Activated B cell treated with CpG ODN at 0.5 μM for 24 hours (primary cell): ENCODE measurements at regions of chr15 and their contacts with region 1.

Region 1: DNA sequence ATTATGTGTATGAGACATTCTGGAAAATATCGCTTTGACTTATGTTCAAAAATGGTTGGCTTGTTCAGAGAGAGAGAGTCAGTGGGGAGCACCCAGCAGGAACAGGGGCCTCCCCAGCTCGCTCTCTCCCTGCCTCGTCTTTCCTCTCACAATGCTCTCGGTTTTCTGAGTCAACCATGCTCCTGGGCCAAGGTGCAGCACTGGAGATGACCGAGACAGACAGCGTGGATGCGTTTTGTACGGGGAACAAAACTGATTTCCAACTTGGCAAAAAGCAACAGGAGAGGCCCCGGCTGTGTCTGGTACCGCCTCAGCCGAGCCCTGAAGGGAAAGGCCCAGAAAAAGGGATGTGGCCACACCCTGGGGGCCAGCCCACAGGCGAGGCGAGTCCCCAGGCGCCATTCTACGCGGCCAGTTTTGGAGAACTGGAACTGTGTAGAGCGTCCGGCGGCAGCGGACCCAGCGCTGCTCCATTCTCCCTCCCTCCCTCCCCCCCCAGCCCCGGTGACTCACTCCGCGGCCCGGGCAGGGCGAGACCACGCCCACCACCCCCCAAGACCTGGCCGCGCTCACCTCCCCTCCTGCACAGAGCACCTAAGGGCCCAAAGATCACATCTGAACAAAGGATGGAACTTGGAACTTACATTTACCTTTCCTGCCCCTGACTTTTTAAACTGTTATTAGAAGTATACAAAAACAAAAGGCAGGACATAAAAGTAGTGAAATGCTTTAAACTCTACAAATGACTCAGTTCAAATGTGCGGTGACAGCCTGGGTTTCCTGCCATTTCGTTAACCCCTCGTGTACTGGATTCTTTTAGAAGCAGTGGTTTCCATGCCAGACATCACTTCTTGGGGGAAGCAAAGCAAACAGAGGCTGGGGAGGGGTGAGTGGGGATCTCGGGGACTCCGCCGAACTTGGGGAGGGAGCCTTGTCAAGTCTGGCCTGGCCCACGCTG is 12.7 kb downstream of the ATP10A start:
- DNase-seq: peak; percentile 67
- ATAC-seq: peak; percentile 88
- H3K4me3 Mint-ChIP-seq: peak overlapping the region; percentile 84
- H3K27ac Mint-ChIP-seq: peak overlapping the region; percentile 93
- H3K4me1 Mint-ChIP-seq: peaks cover 66% of the 10 kb centered on the region
- H3K27me3 Mint-ChIP-seq: peaks cover 3% of the 10 kb centered on the region
- CTCF ChIP-seq: no peak

Region 2: DNA sequence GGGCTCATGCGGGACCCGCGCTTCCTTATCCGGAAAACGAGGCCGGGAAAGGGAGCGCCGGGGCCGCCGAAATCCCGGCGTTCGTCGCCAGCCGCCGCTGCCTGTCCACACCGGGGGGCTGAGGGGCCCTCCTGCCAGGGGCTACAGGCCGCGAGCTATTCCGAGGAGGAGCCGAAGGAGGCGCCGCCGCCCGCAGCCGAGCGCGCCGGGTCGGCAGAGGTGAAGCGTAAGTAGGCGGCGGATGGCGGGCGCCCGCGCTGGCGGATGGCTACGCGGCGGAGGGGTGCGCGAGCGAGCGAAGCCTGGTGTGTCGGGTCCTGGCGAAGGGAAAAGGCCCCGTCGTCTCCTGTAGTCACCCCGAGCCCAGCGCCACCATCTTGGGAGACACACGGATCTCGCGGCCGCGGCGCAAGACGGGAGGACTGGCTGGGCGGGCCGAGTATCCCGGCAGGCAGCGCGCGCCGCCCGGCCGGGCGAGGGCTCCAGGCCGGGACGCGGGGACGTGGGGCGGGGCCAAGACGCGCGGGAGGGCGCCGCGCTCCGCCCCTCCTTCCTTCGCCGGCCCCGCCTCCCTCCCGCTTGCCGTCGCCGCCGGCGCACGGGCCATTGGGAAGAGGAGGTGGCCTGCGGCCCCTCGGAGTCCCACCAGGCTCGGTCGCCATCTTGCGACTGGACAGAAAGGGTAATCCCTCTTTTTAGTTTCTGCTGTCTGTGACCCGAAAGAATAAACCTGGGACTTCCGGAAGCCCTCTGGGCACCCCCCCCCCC is 411.6 kb before region 1 on chr15 and contains the start of gene UBE3A:
- CTCF ChIA-PET with region 1: no interaction called
- POLR2A ChIA-PET with region 1: no interaction called
- intact Hi-C with region 1: loop called (anchors 1 kb)
- DNase-seq: peak; percentile 93
- ATAC-seq: peak; percentile 92
- H3K4me3 Mint-ChIP-seq: peak within 1 kb of the TSS; percentile 88
- H3K27ac Mint-ChIP-seq: peak within 1 kb of the TSS; percentile 91
- H3K4me1 Mint-ChIP-seq: peaks cover 44% of the 10 kb centered on the region
- H3K27me3 Mint-ChIP-seq: no peaks in the 10 kb centered on the region
- CTCF ChIP-seq: no peak
- total RNA-seq, gene UBE3A: 106 and 122 TPM in 2 replicates

Region 3: DNA sequence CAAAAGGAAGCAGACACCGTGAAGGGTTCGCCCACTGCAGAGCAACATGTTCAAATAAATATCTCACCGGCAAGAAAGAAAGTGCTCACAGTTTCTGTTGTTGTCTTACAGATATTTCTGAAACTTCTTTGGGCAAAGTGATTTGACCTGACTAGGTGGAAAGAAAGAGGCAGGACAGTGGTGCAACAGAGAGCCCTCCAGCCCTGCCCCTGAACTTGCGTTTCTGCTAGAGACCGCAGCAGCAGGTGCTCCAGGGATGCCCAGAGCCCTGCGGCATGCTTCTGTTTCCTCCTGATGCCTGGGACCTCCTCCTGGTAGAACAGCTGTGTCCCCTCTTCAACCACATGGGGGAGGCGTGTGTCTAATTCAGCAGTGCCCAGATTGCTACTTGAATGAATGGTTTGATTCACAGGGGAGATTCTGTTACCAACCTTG is 110.7 kb before region 1 on chr15:
- CTCF ChIA-PET with region 1: no interaction called
- POLR2A ChIA-PET with region 1: no interaction called
- intact Hi-C with region 1: loop called (anchors 1 kb)
- DNase-seq: no peak
- ATAC-seq: peak; percentile 78
- H3K4me3 Mint-ChIP-seq: no peak overlapping the region
- H3K27ac Mint-ChIP-seq: no peak overlapping the region
- H3K4me1 Mint-ChIP-seq: peaks cover 20% of the 10 kb centered on the region
- H3K27me3 Mint-ChIP-seq: peaks cover 37% of the 10 kb centered on the region
- CTCF ChIP-seq: no peak

Region 4: DNA sequence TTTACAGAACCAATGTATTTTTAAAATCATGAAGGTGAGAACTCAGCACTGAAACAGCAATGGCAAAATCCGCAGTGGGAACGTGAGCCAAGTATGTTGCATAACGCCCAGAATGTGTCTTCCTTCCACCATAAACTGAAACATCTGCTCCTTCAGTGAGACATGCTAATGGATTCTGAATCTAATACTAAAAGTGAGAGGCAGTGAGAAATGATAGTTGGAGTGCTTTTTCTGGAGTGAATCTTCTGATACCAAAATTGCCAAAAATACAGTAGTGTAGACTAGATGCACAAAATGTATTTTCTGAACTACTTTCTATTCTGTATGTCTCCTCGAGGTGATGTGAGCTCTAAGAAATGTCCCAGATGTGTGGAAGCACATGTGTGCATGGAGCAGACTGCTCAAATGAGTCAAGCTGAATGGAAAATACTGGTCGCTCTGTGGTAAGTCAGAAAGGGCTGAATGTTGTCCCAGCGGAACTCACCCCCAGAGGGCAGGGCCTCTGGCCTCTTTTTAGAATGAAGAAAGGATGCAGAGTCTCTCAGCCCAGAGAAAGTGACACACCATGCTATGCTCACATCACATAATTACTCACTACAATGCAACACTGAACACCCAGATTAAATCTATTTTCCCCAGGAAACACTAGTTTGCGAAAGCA is 60.3 kb before region 1 on chr15:
- CTCF ChIA-PET with region 1: no interaction called
- POLR2A ChIA-PET with region 1: no interaction called
- intact Hi-C with region 1: loop called (anchors 1 kb)
- DNase-seq: no peak
- ATAC-seq: no peak
- H3K4me3 Mint-ChIP-seq: no peak overlapping the region
- H3K27ac Mint-ChIP-seq: no peak overlapping the region
- H3K4me1 Mint-ChIP-seq: peaks cover 20% of the 10 kb centered on the region
- H3K27me3 Mint-ChIP-seq: peaks cover 14% of the 10 kb centered on the region
- CTCF ChIP-seq: no peak

Region 5: DNA sequence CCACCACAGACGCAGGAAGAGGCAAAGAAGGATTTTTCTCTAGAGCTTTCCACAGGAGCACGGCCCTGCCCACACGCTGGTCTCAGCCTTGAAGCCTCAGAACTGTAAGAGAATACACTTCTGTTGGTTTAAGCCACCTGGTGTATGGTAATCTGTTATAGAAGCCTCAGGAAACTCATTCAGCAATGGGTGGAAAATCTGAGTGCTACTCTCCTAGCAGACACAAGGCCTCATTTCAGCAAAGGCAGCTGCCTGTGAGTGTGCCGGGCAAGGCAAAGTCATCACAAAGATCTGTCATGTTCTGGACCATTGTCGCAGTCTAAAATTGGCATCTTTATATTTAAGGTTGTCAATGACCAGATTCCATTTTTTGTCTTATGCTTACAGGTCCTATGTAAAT is 18.3 kb before region 1 on chr15:
- CTCF ChIA-PET with region 1: interaction called, 3 read pairs
- POLR2A ChIA-PET with region 1: no interaction called
- intact Hi-C with region 1: loop called (anchors 2 kb)
- DNase-seq: no peak
- ATAC-seq: peak; percentile 37
- H3K4me3 Mint-ChIP-seq: no peak overlapping the region
- H3K27ac Mint-ChIP-seq: no peak overlapping the region
- H3K4me1 Mint-ChIP-seq: peaks cover 8% of the 10 kb centered on the region
- H3K27me3 Mint-ChIP-seq: peaks cover 10% of the 10 kb centered on the region
- CTCF ChIP-seq: no peak

Region 6: DNA sequence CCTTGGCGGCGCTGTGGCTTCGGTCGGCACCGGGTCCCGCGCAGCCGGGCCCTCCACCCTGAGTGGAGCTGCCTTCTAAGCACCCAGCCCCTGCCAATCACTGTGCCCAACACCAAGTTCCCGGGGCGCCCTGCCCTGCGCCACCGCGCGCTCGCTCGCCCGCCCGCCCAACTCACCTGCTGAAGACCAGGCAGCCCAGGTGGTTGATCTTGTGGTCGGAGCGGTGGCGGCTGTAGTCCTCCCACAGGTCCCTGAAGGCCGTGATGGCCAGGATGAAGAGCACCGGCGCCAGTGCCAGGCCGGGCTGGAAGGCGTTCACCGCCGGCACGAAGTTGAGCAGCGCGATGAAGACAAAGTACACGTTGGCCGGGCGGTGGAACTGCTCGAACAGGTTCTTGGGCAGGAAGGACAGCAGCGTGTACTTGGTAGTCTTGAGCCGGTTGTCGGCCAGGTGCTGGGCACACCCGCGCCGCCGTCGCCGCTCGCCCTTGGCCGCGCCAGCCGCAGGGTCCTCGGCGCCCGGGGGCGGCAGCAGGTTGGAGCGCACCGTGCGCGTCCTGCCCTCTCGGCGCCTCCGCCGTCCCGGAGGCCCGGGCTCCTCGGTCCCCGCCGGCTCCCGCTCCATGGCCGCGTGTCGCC is 12.2 kb after region 1 on chr15:
- CTCF ChIA-PET with region 1: interaction called, 3 read pairs
- POLR2A ChIA-PET with region 1: no interaction called
- intact Hi-C with region 1: loop called (anchors 1 kb)
- DNase-seq: no peak
- ATAC-seq: peak; percentile 21
- H3K4me3 Mint-ChIP-seq: peak overlapping the region; percentile 78
- H3K27ac Mint-ChIP-seq: no peak overlapping the region
- H3K4me1 Mint-ChIP-seq: peaks cover 23% of the 10 kb centered on the region
- H3K27me3 Mint-ChIP-seq: peaks cover 43% of the 10 kb centered on the region
- CTCF ChIP-seq: no peak

Region 7: GRCh38 chr15:26082221-26083109 is 232.0 kb after region 1 on chr15:
- CTCF ChIA-PET with region 1: no interaction called
- POLR2A ChIA-PET with region 1: no interaction called
- intact Hi-C with region 1: loop called (anchors 1 kb)
- DNase-seq: peak; percentile 78
- ATAC-seq: peak; percentile 96
- H3K4me3 Mint-ChIP-seq: peak overlapping the region; percentile 82
- H3K27ac Mint-ChIP-seq: peak overlapping the region; percentile 90
- H3K4me1 Mint-ChIP-seq: peaks cover 29% of the 10 kb centered on the region
- H3K27me3 Mint-ChIP-seq: no peaks in the 10 kb centered on the region
- CTCF ChIP-seq: no peak